ENCODE measurements at regions of chr21 and their contacts with region 1.

Region 1: GRCh38 chr21:34345091-34345871 is 18.5 kb upstream of the KCNE2 start:
- DNase-seq: peak; percentile 27
- H3K4me3 ChIP-seq: no peak overlapping the region
- H3K27ac ChIP-seq: peak overlapping the region; percentile 62
- H3K4me1 ChIP-seq: peaks cover 33% of the 10 kb centered on the region
- H3K27me3 ChIP-seq: no peaks in the 10 kb centered on the region
- CTCF ChIP-seq: no peak

Region 2: GRCh38 chr21:33924079-33924765 is 421.1 kb before region 1 on chr21:
- intact Hi-C with region 1: loop called (anchors 5 kb)
- DNase-seq: peak; percentile 88
- H3K4me3 ChIP-seq: no peak overlapping the region
- H3K27ac ChIP-seq: no peak overlapping the region
- H3K4me1 ChIP-seq: peaks cover 8% of the 10 kb centered on the region
- H3K27me3 ChIP-seq: no peaks in the 10 kb centered on the region
- CTCF ChIP-seq: peak; percentile 94

Region 3: GRCh38 chr21:34762761-34763160 is 417.5 kb after region 1 on chr21:
- intact Hi-C with region 1: no loop called
- DNase-seq: no peak
- H3K4me3 ChIP-seq: no peak overlapping the region
- H3K27ac ChIP-seq: no peak overlapping the region
- H3K4me1 ChIP-seq: no peaks in the 10 kb centered on the region
- H3K27me3 ChIP-seq: peaks cover 17% of the 10 kb centered on the region
- CTCF ChIP-seq: no peak